Endothelial cell of umbilical vein (primary cell): ENCODE measurements at regions of chr1 and their contacts with region 1.

Region 1: GRCh38 chr1:151693076-151693651 is 23.4 kb downstream of the CELF3 start:
- DNase-seq: peak; percentile 52
- H3K4me3 ChIP-seq: no peak overlapping the region
- H3K27ac ChIP-seq: no peak overlapping the region
- H3K4me1 ChIP-seq: no peaks in the 10 kb centered on the region
- H3K27me3 ChIP-seq: no peaks in the 10 kb centered on the region
- CTCF ChIP-seq: peak; percentile 60 to 71
- POLR2A ChIP-seq: no peak

Region 2: DNA sequence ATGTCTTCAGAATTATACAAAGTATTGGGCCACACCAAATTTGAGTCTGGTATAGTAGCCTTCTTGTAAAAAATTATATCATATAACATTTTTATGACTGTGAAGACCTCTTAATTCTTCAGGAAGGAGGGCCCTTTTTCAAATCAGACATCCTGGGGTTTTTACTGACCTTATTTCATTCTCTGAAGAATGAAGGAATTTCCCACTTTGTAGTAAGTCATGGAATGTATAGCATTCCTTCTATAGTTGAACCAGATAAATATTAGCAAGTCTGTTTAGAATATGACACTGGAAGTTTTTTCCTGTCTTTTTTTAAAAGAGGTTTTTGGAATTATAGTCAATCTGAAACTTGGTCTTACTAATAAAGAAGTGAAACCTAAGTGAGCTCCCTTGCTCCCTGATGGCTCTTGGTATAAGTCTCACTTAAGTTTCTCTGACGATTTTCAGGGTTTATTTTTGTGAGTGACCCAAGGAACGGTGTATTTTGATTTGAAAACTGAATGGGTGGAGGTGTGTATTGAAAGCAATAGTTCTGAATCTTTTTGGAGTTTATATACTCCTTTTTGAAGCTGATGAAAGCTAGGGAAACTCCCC is 57.6 kb before region 1 on chr1:
- CTCF ChIA-PET with region 1: interaction called, 10 read pairs
- POLR2A ChIA-PET with region 1: no interaction called
- dilution Hi-C with region 1: no loop called
- intact Hi-C with region 1: no loop called
- DNase-seq: no peak
- H3K4me3 ChIP-seq: no peak overlapping the region
- H3K27ac ChIP-seq: no peak overlapping the region
- H3K4me1 ChIP-seq: no peaks in the 10 kb centered on the region
- H3K27me3 ChIP-seq: no peaks in the 10 kb centered on the region
- CTCF ChIP-seq: no peak
- POLR2A ChIP-seq: no peak

Region 3: DNA sequence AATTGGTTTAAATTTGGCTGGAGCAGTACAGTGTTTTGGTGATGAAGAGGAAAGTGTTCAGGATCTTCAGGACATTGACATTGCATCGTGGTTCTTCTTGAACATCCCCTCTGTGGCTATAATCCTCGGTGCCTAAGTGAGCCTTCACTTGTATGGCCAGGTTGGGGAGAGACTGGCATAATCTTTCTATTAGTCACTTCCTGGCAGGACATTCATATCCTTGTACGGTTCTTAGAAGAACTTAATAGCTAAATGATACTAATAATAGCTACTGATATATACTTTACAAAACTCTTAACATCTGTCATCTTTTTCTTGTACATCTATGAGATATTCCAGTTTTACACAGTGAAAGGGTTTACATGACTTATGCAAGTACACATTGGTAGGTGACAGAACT is 12.4 kb before region 1 on chr1:
- CTCF ChIA-PET with region 1: interaction called, 13 read pairs
- POLR2A ChIA-PET with region 1: no interaction called
- dilution Hi-C with region 1: no loop called
- intact Hi-C with region 1: no loop called
- DNase-seq: peak; percentile 88
- H3K4me3 ChIP-seq: peak overlapping the region in 1 of 3 experiments; percentile 37
- H3K27ac ChIP-seq: peak overlapping the region; percentile 91
- H3K4me1 ChIP-seq: peaks cover 25% of the 10 kb centered on the region
- H3K27me3 ChIP-seq: no peaks in the 10 kb centered on the region
- CTCF ChIP-seq: no peak
- POLR2A ChIP-seq: peak; percentile 36

Region 4: DNA sequence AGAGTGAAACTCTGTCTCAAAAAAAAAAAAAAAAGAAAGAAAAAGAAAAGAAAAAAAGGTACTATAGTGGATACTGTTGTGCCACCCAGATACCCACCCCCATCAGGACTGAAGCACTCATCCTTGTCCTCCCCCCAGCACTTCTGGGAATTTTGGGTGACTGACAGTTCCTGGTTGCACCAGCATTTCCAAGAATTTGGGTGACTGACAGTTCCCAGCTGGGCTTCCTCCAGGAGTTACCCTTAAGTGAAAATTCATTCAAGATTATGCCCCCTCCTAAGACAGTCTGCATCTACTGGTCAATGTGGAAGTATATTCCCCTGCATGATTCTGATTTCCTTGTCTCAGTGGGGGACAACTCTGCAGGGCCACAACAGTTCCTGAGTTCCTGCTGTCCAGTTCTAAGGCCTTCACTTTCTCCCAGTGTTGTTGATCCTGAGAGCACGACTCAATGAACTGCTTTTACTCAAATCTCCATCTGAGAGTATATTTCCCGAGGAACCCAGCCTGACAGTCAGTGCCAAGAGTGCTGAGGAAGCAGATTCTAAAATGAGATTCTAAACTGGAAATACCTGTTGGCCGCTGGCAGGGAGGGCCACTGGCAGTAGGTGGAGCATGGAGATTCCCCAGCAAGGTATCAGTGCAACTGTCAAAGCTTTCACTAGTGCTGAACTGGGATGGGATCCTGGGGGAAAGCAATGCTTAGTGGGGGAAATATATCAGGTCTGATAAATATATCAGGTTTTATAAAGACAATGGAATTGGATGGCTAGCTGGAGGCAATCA is 46.6 kb after region 1 on chr1:
- CTCF ChIA-PET with region 1: interaction called, 19 read pairs
- POLR2A ChIA-PET with region 1: no interaction called
- dilution Hi-C with region 1: no loop called
- intact Hi-C with region 1: loop called (anchors 1 kb)
- DNase-seq: no peak
- H3K4me3 ChIP-seq: no peak overlapping the region
- H3K27ac ChIP-seq: no peak overlapping the region
- H3K4me1 ChIP-seq: no peaks in the 10 kb centered on the region
- H3K27me3 ChIP-seq: peaks cover 18 to 29% of the 10 kb centered on the region in 2 experiments
- CTCF ChIP-seq: no peak
- POLR2A ChIP-seq: no peak